ENCODE measurements at regions of chr13 and their contacts with region 1.

Region 1: DNA sequence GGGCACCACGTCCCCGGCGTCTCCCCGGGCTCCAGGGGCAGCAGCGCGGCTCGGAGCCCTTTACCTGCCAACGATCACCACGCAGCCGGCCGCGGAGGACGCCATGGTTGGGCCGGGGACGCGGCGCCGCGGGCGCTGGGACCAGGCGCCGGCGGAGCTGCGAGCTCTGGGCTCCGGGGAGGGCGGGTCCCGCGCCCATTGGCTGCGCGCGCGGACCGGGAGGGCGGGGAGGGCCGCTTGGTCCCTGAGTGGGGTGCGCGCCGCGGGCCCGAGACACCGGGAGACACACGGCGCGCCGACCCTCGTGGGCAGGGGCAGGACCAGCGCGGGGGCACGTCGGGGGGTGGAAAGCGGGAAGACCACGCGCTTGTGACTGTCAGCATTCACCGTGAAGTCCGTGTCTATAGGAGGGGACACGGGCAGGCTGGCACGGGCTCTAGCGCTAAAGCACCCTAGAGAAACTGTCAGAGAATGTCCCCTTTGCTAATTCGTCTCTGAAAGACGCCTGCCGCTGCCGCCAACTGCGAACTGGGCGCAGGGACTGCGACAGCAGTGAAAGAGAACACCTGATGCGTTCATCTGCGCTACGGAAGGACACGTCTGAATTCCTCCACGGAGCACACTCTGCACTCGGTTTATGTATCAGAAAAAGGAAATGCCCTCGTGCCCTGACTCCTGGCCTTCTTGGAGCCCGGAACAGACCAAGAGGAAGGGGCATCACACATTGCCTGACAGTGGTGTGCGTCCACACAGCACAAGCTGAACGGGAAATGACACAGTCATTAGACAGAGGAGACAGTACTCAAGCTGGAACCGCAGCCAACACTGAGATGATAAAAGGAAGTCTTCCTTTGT is at the start of gene CRYL1:
- DNase-seq: peak; percentile 83 to 88
- ATAC-seq: peak; percentile 95 to 97 (median 96)
- H3K4me3 ChIP-seq: peak within 1 kb of the TSS; percentile 83
- H3K27ac ChIP-seq: peak within 1 kb of the TSS; percentile 91
- H3K4me1 ChIP-seq: no peaks in the 10 kb centered on the region
- H3K27me3 ChIP-seq: no peaks in the 10 kb centered on the region
- CTCF ChIP-seq: no peak
- total RNA-seq, gene CRYL1: 12.4 to 17.0 (median 14.2) TPM

Region 2: DNA sequence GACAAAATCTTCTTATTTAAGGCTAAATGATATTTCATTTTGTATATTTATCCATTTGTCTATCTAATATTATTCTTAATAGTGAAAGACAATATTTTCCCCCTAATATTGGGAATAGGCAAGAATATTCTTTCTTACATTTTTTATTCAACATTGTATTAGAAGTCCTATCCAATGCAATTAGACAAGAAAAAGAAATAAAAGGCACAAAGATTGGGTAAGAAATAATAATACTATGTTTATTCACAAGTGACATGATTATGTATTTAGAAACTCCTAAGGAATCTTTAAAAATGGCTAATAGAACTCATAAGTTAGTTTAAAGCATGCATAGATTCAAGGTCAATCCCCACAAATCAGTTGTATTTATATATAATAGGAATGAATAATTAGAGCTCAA is 11.1 kb after region 1 on chr13:
- intact Hi-C with region 1: no loop called
- DNase-seq: no peak
- ATAC-seq: no peak
- H3K4me3 ChIP-seq: no peak overlapping the region
- H3K27ac ChIP-seq: no peak overlapping the region
- H3K4me1 ChIP-seq: no peaks in the 10 kb centered on the region
- H3K27me3 ChIP-seq: no peaks in the 10 kb centered on the region
- CTCF ChIP-seq: no peak

Region 3: DNA sequence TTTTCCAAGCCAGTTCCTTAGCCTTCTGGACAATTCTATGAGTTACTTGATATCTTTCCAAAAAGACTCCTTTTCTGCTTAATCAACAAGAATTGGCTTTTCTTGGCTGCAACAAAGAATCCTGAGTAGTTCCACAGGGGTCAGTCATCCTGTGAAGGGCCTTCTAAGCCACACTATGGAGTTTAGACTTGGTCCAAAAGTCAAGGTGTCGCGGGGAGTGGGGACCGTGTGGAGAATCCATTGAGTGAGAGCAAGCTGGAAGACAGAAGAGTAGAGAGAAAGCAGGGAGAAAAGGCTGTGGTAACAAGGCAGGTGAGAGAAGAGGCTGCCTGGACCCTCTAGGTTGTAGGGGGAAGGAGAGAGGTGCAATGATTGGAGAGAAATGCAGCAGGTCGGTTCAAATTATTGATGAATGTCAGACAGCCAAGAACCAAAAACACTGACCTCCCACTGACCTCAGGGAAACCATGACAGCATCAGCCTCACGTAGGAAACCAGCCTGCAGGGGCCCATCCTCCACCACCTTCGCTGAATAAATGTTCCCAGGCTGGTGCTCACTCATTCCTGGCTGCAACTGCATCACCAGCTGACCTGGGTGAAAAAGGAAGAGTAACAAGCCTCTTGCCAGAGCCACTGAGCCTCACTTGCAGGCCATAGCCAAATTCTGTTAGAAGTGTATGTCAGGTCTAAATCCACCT is 33.9 kb after region 1 on chr13:
- intact Hi-C with region 1: loop called in 1 of 2 experiments (anchors 5 kb)
- DNase-seq: no peak
- ATAC-seq: no peak
- H3K4me3 ChIP-seq: no peak overlapping the region
- H3K27ac ChIP-seq: no peak overlapping the region
- H3K4me1 ChIP-seq: no peaks in the 10 kb centered on the region
- H3K27me3 ChIP-seq: no peaks in the 10 kb centered on the region
- CTCF ChIP-seq: no peak

Region 4: DNA sequence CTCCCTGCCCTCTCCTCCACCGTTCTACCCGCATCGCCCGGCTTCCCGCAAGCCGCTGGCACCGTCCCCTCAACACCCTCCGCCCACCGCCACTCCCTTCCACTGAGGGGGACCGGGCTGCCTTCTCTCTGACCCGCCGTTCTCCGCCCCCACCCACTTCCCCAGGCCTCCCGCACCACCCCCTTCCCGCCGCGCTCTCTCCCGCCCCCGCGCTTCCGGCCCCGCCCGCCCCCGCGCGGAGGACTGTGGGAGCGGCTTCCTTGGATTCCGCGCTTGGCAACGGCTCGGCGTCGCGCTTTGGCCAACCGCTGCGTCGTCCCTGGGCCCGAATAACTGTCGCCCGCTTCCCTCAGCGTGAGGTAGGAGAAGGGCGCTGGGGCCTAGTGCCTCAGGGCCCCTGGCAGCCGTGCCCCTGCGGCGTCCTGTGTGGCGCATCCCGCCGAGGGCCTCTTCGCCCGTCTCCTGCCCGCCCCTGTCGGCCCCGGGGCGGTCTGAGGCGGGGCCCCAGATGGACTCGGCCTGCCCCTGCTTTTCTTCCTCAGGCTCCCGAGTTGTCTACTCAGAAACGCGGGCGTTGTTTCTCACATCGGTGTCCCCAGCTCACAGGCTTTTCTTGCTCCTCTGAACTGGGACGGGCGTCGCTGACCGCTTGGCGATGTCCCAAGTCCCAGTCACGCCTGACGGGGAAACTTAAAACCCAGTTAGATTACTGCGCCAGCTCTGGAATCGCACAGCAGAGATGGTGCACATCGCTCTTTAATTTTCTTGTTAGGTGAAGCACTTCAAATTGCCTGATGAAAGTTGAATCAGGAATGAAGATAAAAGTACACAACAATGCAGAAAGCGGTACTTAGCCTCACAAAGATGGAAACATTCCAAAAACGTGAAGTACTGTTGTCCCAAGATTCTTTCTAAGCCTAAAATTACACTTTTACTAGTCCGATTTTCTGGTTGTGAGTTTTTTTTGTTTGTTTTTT is 41.3 kb after region 1 on chr13 and contains the start of gene IFT88:
- intact Hi-C with region 1: loop called (anchors 2 to 5 kb)
- DNase-seq: peak; percentile 93 to 95
- ATAC-seq: peak; percentile 95 to 97 (median 96)
- H3K4me3 ChIP-seq: peak within 1 kb of the TSS; percentile 76
- H3K27ac ChIP-seq: peak within 1 kb of the TSS; percentile 93
- H3K4me1 ChIP-seq: no peaks in the 10 kb centered on the region
- H3K27me3 ChIP-seq: no peaks in the 10 kb centered on the region
- CTCF ChIP-seq: no peak
- total RNA-seq, gene IFT88: 3.9 to 9.8 (median 6.0) TPM